GM12878 (cell line): ENCODE measurements at regions of chr9 and their contacts with region 1.

Region 1: GRCh38 chr9:69564557-69564956 is 107.6 kb downstream of the APBA1 start:
- DNase-seq: no peak
- ATAC-seq: no peak
- H3K4me3 ChIP-seq: no peak overlapping the region
- H3K27ac ChIP-seq: no peak overlapping the region
- H3K4me1 ChIP-seq: no peaks in the 10 kb centered on the region
- H3K27me3 ChIP-seq: no peaks in the 10 kb centered on the region
- CTCF ChIP-seq: no peak
- EP300 ChIP-seq: no peak
- POLR2A ChIP-seq: no peak
- RAD21 ChIP-seq: no peak

Region 2: DNA sequence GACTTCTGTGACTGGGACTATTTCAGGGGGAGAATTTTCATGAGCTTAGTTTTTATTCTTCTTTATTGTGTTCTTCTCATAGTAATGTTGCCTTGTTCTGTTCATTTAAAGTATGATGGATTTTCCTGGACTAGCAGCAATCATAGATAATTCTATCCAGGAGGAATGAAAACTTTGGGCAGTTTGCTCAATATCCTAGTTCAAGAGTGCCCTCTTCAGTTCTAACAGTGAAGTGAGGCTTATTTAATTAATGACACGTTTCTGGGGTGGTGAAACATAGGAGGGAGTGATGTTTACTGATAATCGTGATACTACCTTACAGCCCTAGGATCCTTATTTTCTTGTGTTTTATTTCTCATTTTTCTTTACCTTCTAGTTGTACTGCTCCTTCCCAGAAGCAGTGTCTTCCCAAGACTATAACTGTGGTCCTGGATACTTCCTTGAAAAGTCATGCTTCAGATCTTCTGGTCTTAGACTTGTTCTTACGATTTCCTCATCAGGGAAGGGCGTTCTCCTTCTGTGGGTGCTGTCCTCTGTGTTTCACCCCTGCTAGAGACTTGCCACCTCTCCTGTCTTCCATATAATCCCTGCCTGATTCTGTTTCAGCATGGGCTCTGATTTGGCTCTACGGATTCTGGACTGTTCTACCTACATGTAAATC is 313.4 kb after region 1 on chr9:
- CTCF ChIA-PET with region 1: no interaction called
- POLR2A ChIA-PET with region 1: no interaction called
- RAD21 ChIA-PET with region 1: no interaction called
- SMC1A ChIA-PET with region 1: no interaction called
- in situ Hi-C with region 1: loop called (anchors 10 kb)
- intact Hi-C with region 1: no loop called
- DNase-seq: no peak
- ATAC-seq: peak; percentile 57
- H3K4me3 ChIP-seq: no peak overlapping the region
- H3K27ac ChIP-seq: no peak overlapping the region
- H3K4me1 ChIP-seq: no peaks in the 10 kb centered on the region
- H3K27me3 ChIP-seq: no peaks in the 10 kb centered on the region
- CTCF ChIP-seq: peak; percentile 46 to 53 (median 53); a peak in 5 of 6 replicates
- EP300 ChIP-seq: no peak
- POLR2A ChIP-seq: no peak
- RAD21 ChIP-seq: peak; percentile 76

Region 3: GRCh38 chr9:70100362-70100761 is 535.8 kb after region 1 on chr9:
- CTCF ChIA-PET with region 1: no interaction called
- POLR2A ChIA-PET with region 1: no interaction called
- RAD21 ChIA-PET with region 1: no interaction called
- SMC1A ChIA-PET with region 1: no interaction called
- in situ Hi-C with region 1: no loop called
- intact Hi-C with region 1: no loop called
- DNase-seq: no peak
- ATAC-seq: no peak
- H3K4me3 ChIP-seq: no peak overlapping the region
- H3K27ac ChIP-seq: no peak overlapping the region
- H3K4me1 ChIP-seq: no peaks in the 10 kb centered on the region
- H3K27me3 ChIP-seq: no peaks in the 10 kb centered on the region
- CTCF ChIP-seq: no peak
- EP300 ChIP-seq: no peak
- POLR2A ChIP-seq: no peak
- RAD21 ChIP-seq: no peak